Activated CD4-positive, alpha-beta memory T cell treated with anti-CD3 and anti-CD28 coated beads for 36 hours (primary cell): ENCODE measurements at regions of chr5 and their contacts with region 1.

Region 1: GRCh38 chr5:80093796-80094195 is 58.6 kb downstream of the THBS4 start:
- DNase-seq: no peak
- H3K4me3 Mint-ChIP-seq: no peak overlapping the region
- H3K27ac Mint-ChIP-seq: no peak overlapping the region
- H3K4me1 Mint-ChIP-seq: peaks cover 22% of the 10 kb centered on the region
- H3K27me3 Mint-ChIP-seq: no peaks in the 10 kb centered on the region

Region 2: GRCh38 chr5:80060966-80061365 is 32.8 kb before region 1 on chr5:
- CTCF ChIA-PET with region 1: no interaction called
- POLR2A ChIA-PET with region 1: no interaction called
- intact Hi-C with region 1: no loop called
- DNase-seq: no peak
- H3K4me3 Mint-ChIP-seq: no peak overlapping the region
- H3K27ac Mint-ChIP-seq: no peak overlapping the region
- H3K4me1 Mint-ChIP-seq: peaks cover 11% of the 10 kb centered on the region
- H3K27me3 Mint-ChIP-seq: no peaks in the 10 kb centered on the region

Region 3: GRCh38 chr5:80125962-80126480 is 32.2 kb after region 1 on chr5:
- CTCF ChIA-PET with region 1: interaction called, 5 read pairs
- POLR2A ChIA-PET with region 1: no interaction called
- intact Hi-C with region 1: loop called (anchors 2 kb)
- DNase-seq: peak; percentile 28
- H3K4me3 Mint-ChIP-seq: peak overlapping the region; percentile 51
- H3K27ac Mint-ChIP-seq: peak overlapping the region; percentile 70
- H3K4me1 Mint-ChIP-seq: peaks cover 52% of the 10 kb centered on the region
- H3K27me3 Mint-ChIP-seq: no peaks in the 10 kb centered on the region

Region 4: DNA sequence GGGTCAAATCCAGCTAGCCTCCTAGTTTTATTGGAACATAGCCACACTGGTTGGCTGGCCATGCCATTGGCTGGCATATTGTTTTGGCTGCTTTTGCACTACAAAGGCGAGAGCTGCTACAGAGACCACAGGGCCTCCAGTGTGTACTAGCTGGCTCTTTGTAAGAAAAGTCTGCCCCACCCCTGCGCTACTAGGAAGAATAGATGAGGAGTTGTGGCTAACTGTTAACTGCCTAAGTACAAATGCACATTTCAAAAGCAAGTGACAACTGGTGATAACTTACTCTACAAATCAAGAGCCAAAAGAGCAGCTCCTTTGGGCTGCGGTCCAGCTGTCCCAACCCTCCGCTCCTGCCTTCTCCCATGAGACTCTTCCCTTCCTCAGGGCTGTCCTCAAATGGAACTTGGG is 98.2 kb after region 1 on chr5:
- CTCF ChIA-PET with region 1: interaction called, 14 read pairs
- POLR2A ChIA-PET with region 1: no interaction called
- intact Hi-C with region 1: no loop called
- DNase-seq: peak; percentile 63
- H3K4me3 Mint-ChIP-seq: peak overlapping the region; percentile 61
- H3K27ac Mint-ChIP-seq: peak overlapping the region; percentile 92
- H3K4me1 Mint-ChIP-seq: peaks cover 78% of the 10 kb centered on the region
- H3K27me3 Mint-ChIP-seq: no peaks in the 10 kb centered on the region

Region 5: DNA sequence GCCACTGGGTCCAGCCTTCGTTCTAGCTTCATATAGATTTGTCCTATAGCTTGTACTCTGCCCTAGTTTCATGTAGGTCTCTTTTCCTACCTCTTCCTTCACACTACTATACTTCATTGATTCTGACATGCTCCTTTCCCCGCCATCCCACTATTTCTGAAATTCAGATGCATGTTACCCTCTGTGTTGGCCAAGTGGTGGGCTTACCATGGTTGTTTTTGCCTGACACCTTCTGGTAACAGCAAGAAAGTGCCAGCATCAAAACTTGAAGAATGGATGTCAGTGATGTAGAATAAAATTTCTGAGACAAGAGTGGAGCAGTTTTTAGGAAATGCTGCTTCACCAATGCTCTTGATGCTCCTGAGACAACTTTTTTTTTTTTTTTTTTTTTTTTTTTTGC is 181.6 kb after region 1 on chr5:
- CTCF ChIA-PET with region 1: interaction called, 49 read pairs
- POLR2A ChIA-PET with region 1: no interaction called
- intact Hi-C with region 1: loop called (anchors 1 kb)
- DNase-seq: peak; percentile 27
- H3K4me3 Mint-ChIP-seq: no peak overlapping the region
- H3K27ac Mint-ChIP-seq: no peak overlapping the region
- H3K4me1 Mint-ChIP-seq: peaks cover 18% of the 10 kb centered on the region
- H3K27me3 Mint-ChIP-seq: no peaks in the 10 kb centered on the region

Region 6: DNA sequence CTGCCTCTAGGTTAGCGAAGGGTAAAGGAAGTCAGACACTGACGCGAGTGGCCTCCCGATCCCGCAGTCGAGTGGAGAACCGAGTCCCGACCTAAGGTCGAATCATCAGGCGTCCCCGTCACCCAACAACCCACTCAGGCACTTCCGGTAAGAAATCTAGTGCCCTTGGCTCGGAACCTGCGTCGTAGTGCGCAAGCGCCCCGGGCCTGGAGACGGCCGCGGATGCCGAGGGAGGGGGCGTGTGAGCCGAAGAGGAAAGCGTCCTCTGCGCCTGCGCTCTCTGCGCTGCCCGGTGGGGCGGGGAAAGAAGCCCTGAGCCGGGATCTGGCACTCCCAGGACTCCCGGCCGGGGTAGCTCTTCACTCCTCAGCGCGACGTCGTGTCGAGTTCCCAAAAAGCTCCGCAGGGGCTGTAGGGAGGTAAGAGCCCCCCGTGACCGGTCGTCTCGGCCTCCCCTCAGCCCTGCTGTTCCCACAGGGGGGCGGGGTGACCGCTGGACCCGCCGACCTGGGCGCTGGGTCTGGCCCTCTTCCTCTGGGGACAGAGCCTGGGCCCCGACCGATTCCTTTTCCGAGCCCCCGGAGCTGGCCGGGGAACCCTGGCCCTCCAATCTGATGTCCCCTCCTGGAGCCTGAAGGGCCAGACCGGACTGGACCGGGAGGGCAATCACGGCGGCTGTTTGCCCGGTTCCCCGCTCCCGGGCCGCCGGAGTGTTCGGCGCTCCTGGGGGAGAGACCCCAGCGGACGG is 314.1 kb after region 1 on chr5 and contains the start of gene ZFYVE16:
- CTCF ChIA-PET with region 1: no interaction called
- POLR2A ChIA-PET with region 1: no interaction called
- intact Hi-C with region 1: loop called (anchors 10 kb)
- DNase-seq: peak; percentile 98
- H3K4me3 Mint-ChIP-seq: peak within 1 kb of the TSS; percentile 92
- H3K27ac Mint-ChIP-seq: peak within 1 kb of the TSS; percentile 97
- H3K4me1 Mint-ChIP-seq: peaks cover 16% of the 10 kb centered on the region
- H3K27me3 Mint-ChIP-seq: no peaks in the 10 kb centered on the region
- total RNA-seq, gene ZFYVE16: 12.1 to 15.7 TPM